ENCODE measurements at regions of chr13 and their contacts with region 1.

Region 1: GRCh38 chr13:49436890-49437289 is 7.0 kb downstream of the CAB39L start:
- DNase-seq: no peak
- ATAC-seq: peak; percentile 87

Region 2: DNA sequence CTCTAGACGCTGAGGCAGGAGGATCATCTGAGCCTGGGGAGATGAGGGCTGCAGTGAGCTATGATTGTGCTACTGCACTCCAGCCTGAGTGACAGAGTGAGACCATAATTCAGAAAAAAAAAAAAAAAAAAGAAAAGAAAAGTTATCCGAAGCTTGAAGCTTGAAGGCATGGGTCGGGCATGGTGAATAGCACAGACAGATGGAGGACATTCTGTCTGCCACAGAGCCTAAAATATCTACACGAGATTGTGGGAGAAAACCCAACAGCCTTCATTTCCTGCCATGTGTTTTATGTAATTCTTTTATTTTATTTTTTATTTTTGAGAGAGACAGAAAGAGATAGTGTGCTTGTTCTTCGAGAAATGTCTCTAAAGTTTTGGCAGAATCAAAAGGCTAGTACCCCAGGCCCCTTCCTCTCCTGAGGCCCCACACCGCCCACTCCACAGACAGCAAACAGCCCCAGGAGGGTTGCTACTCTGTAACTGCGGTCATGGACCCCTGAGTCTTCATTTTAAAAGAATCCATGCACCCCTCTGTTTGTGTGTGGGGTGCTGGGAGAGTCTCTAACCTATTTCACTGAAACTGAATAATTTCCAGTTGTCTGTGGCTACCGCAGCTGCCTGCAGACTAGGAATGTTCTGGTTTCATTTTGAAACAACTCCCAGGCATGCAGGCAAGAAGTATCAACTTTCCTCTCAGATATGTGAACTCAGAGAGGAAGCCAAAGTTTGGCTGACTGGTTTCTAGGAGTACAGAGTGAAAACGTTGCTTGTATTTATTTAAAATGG is 865.6 kb before region 1 on chr13:
- intact Hi-C with region 1: no loop called
- DNase-seq: no peak
- ATAC-seq: peak; percentile 71

Region 3: GRCh38 chr13:49308089-49308875 is 128.6 kb before region 1 on chr13:
- intact Hi-C with region 1: loop called (anchors 2 kb)
- DNase-seq: peak; percentile 89
- ATAC-seq: peak; percentile 93

Region 4: DNA sequence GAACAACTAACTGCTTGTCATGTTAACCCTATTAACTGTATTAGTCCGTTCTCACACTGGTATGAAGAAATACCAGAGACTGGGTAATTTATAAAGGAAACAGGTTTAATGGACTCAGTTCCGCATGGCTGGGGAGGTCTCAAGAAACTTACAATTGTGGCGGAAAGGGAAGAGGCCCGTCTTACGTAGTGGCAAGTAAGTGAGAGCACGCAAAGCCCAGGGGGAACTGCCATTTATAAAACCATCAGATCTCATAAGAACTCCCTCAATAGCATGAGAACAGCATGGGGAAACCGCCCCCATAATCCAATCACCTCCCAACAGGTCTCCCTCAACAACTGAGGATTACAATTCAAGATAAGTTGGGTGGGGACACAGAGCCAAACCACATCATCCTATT is 93.6 kb after region 1 on chr13:
- intact Hi-C with region 1: no loop called
- DNase-seq: no peak
- ATAC-seq: no peak

Measured in Right ventricle myocardium inferior (tissue), 1 donor.